ENCODE measurements at regions of chr15 and their contacts with region 1.

Region 1: GRCh38 chr15:78618490-78618934 is 2.3 kb downstream of the CHRNA3 start:
- DNase-seq: peak; percentile 81 to 89 (median 83)
- H3K4me3 ChIP-seq: no peak overlapping the region
- H3K27ac ChIP-seq: no peak overlapping the region
- H3K4me1 ChIP-seq: peaks cover 2% of the 10 kb centered on the region
- H3K27me3 ChIP-seq: no peaks in the 10 kb centered on the region
- CTCF ChIP-seq: peak; percentile 54 to 88 (median 86)
- EP300 ChIP-seq: no peak
- POLR2A ChIP-seq: no peak

Region 2: GRCh38 chr15:78540141-78540928 is 78.2 kb before region 1 on chr15 and contains the start of gene PSMA4:
- intact Hi-C with region 1: no loop called
- DNase-seq: peak; percentile 91 to 96 (median 94)
- H3K4me3 ChIP-seq: peak within 1 kb of the TSS; percentile 90
- H3K27ac ChIP-seq: peak within 1 kb of the TSS; percentile 82 to 92
- H3K4me1 ChIP-seq: peaks cover 2% of the 10 kb centered on the region
- H3K27me3 ChIP-seq: no peaks in the 10 kb centered on the region
- CTCF ChIP-seq: no peak
- EP300 ChIP-seq: peak; percentile 4
- POLR2A ChIP-seq: peak; percentile 88
- total RNA-seq, gene PSMA4: 75.4 to 123 (median 106) TPM

Region 3: DNA sequence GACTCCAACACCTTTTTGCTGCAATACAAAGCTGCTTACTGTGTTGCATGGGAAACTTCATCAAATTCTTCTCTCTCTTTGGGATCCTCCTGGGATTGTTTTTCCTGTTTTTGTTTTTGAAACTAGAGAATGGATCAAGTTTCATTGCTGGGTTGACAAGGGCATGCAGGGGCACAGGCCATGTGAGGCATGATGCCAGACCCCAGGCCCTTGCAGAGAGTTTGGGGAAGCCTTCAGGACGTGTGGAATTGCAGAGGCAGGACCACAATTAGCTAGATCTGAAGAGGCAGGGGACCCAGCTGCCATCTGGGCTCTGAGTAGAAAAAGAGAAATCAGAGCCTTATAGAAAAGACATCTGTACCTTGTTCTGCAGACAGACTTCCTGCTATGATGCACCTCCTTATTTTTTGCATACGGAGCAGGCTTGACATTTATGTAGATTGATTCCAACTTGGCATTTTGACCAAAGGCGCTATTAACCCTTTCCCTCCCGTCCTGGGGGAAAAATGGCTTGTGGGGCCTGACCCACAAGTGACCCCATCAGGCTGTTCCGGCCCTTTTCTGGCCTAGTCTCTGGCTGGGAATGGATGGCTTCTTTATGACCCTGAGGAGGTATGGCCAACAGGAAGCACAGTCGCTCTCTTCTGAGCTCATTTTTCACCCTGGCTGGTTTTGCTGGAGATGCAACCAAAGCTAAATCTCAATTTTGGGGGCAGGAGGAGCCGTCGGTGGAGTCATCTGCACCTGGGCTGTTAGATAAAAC is 66.8 kb after region 1 on chr15:
- intact Hi-C with region 1: no loop called
- DNase-seq: no peak
- H3K4me3 ChIP-seq: no peak overlapping the region
- H3K27ac ChIP-seq: no peak overlapping the region
- H3K4me1 ChIP-seq: no peaks in the 10 kb centered on the region
- H3K27me3 ChIP-seq: no peaks in the 10 kb centered on the region
- CTCF ChIP-seq: no peak
- EP300 ChIP-seq: no peak
- POLR2A ChIP-seq: no peak

Region 4: GRCh38 chr15:78709263-78709882 is 90.9 kb after region 1 on chr15:
- intact Hi-C with region 1: loop called in 3 of 4 experiments (anchors 5 to 10 kb)
- DNase-seq: peak; percentile 37 to 77 (median 67)
- H3K4me3 ChIP-seq: no peak overlapping the region
- H3K27ac ChIP-seq: no peak overlapping the region
- H3K4me1 ChIP-seq: no peaks in the 10 kb centered on the region
- H3K27me3 ChIP-seq: no peaks in the 10 kb centered on the region
- CTCF ChIP-seq: peak; percentile 67 to 74 (median 74)
- EP300 ChIP-seq: no peak
- POLR2A ChIP-seq: no peak

Region 5: DNA sequence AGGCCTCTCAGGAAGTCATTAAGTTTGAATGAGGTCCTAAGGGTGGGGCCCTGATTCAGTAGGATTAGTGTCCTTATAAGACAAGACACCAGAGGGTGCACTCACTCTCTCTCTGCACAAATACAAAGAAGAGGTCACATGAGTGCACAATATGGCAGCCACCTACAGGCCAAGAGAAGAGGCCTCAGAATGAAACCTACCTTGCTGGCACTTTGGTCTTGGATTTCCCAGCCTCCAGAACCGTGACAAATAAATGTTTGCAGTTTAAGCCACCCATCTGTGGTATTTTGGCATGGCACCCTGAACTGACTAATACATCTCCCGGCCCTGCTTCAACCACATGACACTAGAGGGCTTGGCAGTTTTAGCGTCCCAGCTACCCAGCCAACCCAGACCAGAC is 96.4 kb after region 1 on chr15:
- intact Hi-C with region 1: loop called in 1 of 4 experiments (anchors 5 kb)
- DNase-seq: no peak
- H3K4me3 ChIP-seq: no peak overlapping the region
- H3K27ac ChIP-seq: no peak overlapping the region
- H3K4me1 ChIP-seq: no peaks in the 10 kb centered on the region
- H3K27me3 ChIP-seq: no peaks in the 10 kb centered on the region
- CTCF ChIP-seq: no peak
- EP300 ChIP-seq: no peak
- POLR2A ChIP-seq: no peak

Region 6: DNA sequence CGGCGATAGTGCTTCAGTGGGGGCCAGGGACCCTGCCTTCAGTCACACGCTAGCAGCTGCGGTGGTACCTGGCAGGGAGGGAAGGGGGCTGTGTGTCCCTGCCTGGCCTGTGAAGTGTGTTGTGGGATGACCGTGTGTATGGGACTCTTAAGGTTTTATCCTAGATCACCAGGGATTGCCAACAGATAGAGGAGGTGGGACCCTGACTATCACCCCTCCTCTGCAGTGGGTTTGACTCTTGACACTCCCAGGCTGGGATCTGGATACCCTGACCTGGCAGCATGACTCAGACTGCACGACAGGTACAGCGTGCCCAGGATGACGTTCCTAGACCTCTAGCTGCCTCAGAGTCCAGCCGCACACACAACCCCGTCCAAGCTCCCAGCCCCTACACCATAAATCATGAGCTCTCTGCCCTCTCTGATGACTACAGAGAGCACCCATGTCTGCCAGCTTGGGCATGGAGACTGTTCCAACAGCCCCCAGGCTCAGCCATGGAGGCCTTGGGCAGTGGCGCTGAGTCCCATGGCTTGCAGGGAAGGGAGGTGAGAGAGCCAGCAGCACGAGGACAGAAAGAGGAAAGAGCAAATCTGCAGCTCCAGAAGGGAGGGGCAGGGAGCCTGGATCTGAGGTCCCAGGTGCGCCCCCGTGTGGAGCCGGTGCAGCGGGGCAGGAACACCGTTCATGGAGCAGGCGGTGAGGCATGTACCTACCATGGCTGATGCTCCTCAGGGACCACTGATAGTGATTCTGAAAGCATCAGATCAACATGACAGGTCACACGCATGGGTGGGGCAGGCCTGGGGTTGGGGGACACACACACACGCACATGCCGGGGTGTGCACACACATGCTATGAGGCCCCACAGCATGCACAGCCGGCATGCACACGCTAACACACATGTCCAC is 121.7 kb after region 1 on chr15:
- intact Hi-C with region 1: no loop called
- DNase-seq: no peak
- H3K4me3 ChIP-seq: no peak overlapping the region
- H3K27ac ChIP-seq: no peak overlapping the region
- H3K4me1 ChIP-seq: no peaks in the 10 kb centered on the region
- H3K27me3 ChIP-seq: no peaks in the 10 kb centered on the region
- CTCF ChIP-seq: no peak
- EP300 ChIP-seq: no peak
- POLR2A ChIP-seq: no peak

Region 7: GRCh38 chr15:78750566-78750965 is 132.1 kb after region 1 on chr15:
- intact Hi-C with region 1: loop called in 1 of 4 experiments (anchors 2 kb)
- DNase-seq: peak in 2 of 5 donors; percentile 26 to 32
- H3K4me3 ChIP-seq: no peak overlapping the region
- H3K27ac ChIP-seq: no peak overlapping the region
- H3K4me1 ChIP-seq: peaks cover 4% of the 10 kb centered on the region
- H3K27me3 ChIP-seq: no peaks in the 10 kb centered on the region
- CTCF ChIP-seq: no peak
- EP300 ChIP-seq: no peak
- POLR2A ChIP-seq: no peak

Region 8: GRCh38 chr15:78930556-78931401 is 312.3 kb after region 1 on chr15:
- intact Hi-C with region 1: no loop called
- DNase-seq: no peak
- H3K4me3 ChIP-seq: no peak overlapping the region
- H3K27ac ChIP-seq: no peak overlapping the region
- H3K4me1 ChIP-seq: peaks cover 1% of the 10 kb centered on the region
- H3K27me3 ChIP-seq: no peaks in the 10 kb centered on the region
- CTCF ChIP-seq: no peak
- EP300 ChIP-seq: no peak
- POLR2A ChIP-seq: no peak